ENCODE measurements at regions of chr20 and their contacts with region 1.

Region 1: GRCh38 chr20:62603021-62603906 is 39.0 kb upstream of the SLCO4A1 start:
- DNase-seq: peak; percentile 25
- H3K4me3 Mint-ChIP-seq: peak overlapping the region; percentile 78
- H3K27ac Mint-ChIP-seq: peak overlapping the region; percentile 79
- H3K4me1 Mint-ChIP-seq: peaks cover 48% of the 10 kb centered on the region
- H3K27me3 Mint-ChIP-seq: peaks cover 21% of the 10 kb centered on the region

Region 2: GRCh38 chr20:62439218-62439617 is 164.0 kb before region 1 on chr20:
- intact Hi-C with region 1: no loop called
- DNase-seq: no peak
- H3K4me3 Mint-ChIP-seq: no peak overlapping the region
- H3K27ac Mint-ChIP-seq: no peak overlapping the region
- H3K4me1 Mint-ChIP-seq: no peaks in the 10 kb centered on the region
- H3K27me3 Mint-ChIP-seq: peaks cover 8% of the 10 kb centered on the region

Region 3: DNA sequence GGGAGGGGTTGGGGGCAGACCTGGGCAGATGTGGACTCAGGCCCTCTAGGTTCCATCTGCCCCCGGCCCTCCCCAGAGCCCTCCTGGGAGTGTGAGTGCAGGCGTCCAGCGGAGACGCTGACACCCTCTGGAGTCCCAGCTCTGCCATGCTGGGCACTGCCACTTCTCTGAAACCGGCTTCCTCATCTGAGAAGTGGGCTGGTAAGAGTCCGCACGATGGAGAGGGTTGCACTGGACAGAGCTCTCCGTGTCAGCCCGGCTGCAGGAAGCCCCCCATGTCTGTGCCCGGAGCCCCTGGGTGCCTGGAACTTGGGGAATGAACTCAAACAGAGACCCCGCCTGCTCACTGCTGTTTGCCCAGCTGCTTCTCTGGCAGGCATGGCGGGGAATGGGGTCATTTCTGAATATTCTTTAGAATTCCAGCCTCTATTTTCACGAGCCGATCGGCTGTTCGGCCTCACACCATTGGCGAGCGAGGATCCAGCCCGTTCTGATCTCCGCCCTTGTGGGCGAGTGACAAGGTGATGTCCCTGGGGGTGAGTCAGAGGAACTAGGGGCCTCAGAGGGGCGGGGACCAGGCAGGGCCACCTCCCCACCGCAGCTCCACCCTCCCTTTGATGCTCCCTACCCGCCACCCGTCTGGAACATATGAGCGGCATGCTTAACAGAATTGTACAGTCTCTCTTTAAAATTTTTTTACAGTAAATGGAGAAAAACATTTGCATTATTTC is 79.6 kb before region 1 on chr20:
- intact Hi-C with region 1: loop called (anchors 5 kb)
- DNase-seq: peak; percentile 44
- H3K4me3 Mint-ChIP-seq: peak overlapping the region; percentile 40
- H3K27ac Mint-ChIP-seq: peak overlapping the region; percentile 44
- H3K4me1 Mint-ChIP-seq: peaks cover 13% of the 10 kb centered on the region
- H3K27me3 Mint-ChIP-seq: peaks cover 7% of the 10 kb centered on the region

Region 4: DNA sequence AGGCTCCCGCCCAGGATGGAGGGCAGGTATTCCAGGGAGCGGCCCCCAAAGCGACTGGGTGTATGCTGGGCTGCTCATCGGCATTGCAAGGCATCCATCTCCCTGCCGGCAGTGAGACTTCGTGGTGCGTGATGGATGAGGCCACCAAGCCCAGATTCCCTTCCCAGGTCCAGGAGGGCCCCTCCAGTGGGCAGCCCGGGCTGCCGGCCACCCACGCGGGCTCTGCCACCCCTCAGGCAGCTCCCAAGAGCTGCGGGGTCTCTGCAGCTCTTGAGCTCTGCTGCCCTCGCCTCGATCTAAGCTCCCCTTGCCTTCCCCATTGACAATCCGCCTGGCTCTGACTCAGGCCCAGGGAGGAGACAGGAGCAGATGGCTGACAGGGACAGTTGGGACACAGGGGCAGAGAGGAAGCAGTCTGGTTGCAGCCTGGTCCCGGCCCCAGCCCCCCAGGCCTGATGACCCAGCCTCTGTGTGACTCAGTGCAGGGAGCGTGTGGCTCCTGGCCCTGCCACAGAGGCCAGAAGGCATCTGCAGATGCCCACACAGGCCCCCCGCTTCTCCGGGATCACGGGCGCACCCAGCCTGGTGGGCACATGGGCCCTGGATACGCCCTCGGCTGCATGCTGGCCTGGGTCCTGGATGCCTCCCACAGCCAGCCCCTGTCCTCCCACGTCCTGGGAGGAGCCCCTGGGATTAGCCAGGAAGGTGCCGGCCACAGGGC is 72.1 kb after region 1 on chr20:
- intact Hi-C with region 1: no loop called
- DNase-seq: no peak
- H3K4me3 Mint-ChIP-seq: no peak overlapping the region
- H3K27ac Mint-ChIP-seq: no peak overlapping the region
- H3K4me1 Mint-ChIP-seq: peaks cover 5% of the 10 kb centered on the region
- H3K27me3 Mint-ChIP-seq: peaks cover 9% of the 10 kb centered on the region